PC-9 (cell line): ENCODE measurements at regions of chr16 and their contacts with region 1.

Region 1: DNA sequence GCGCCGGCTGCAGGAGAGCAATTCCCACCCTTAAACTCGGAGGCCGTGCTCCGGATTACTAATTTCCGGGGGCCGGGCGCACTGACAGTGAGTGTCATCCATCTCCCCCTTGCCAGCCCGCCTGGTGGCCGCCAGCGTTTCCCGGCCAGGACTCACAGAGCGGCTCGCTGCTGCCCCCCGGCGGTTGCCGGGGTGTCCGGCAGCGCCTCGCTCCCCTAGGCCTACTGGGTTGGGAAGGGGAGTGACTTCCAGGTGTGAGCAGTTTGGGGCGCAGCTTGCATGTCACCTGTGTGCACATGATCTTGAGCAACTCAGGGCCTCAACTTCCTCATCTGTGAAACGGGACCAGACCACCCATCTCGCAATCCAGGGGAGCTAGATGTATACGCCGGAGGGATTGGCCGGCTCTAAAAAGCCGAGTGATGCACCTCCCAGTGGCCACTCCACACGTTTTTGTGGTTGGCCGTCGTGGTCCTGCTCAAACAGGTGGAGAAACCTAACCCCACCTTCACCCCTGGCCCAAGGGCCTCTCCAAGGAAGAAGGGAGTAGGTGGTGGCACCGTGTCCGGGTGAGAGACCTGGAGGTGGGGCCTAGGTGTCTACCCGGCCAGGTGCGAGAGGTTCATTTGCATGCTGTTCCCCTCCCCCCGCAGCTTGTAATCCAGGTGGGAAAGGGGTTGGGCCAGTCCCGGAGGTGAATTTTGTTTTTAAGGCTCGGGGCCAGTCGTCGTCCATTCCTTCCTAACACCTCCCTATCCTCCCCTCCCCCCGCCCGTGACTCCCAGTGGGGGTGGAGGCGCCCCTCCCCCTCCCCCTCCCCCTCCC is 2.4 kb upstream of the GSE1 start:
- DNase-seq: peak; percentile 89 to 91
- H3K4me3 ChIP-seq: peak overlapping the region; percentile 78
- H3K27ac ChIP-seq: peak overlapping the region; percentile 78
- H3K4me1 ChIP-seq: peaks cover 25% of the 10 kb centered on the region
- H3K27me3 ChIP-seq: no peaks in the 10 kb centered on the region
- CTCF ChIP-seq: peak; percentile 93

Region 2: GRCh38 chr16:85420501-85421337 is 190.0 kb before region 1 on chr16:
- CTCF ChIA-PET with region 1: interaction called, 7 read pairs
- POLR2A ChIA-PET with region 1: no interaction called
- intact Hi-C with region 1: loop called (anchors 1 kb)
- DNase-seq: peak in 1 of 2 experiments; percentile 75
- H3K4me3 ChIP-seq: no peak overlapping the region
- H3K27ac ChIP-seq: no peak overlapping the region
- H3K4me1 ChIP-seq: peaks cover 20% of the 10 kb centered on the region
- H3K27me3 ChIP-seq: no peaks in the 10 kb centered on the region
- CTCF ChIP-seq: peak; percentile 99

Region 3: GRCh38 chr16:85473909-85474620 is 136.7 kb before region 1 on chr16:
- CTCF ChIA-PET with region 1: no interaction called
- POLR2A ChIA-PET with region 1: no interaction called
- intact Hi-C with region 1: loop called (anchors 2 kb)
- DNase-seq: no peak
- H3K4me3 ChIP-seq: no peak overlapping the region
- H3K27ac ChIP-seq: no peak overlapping the region
- H3K4me1 ChIP-seq: peaks cover 39% of the 10 kb centered on the region
- H3K27me3 ChIP-seq: no peaks in the 10 kb centered on the region
- CTCF ChIP-seq: no peak

Region 4: GRCh38 chr16:85528528-85529387 is 82.0 kb before region 1 on chr16:
- CTCF ChIA-PET with region 1: interaction called, 4 read pairs
- POLR2A ChIA-PET with region 1: no interaction called
- intact Hi-C with region 1: loop called (anchors 1 kb)
- DNase-seq: no peak
- H3K4me3 ChIP-seq: no peak overlapping the region
- H3K27ac ChIP-seq: no peak overlapping the region
- H3K4me1 ChIP-seq: peaks cover 25% of the 10 kb centered on the region
- H3K27me3 ChIP-seq: no peaks in the 10 kb centered on the region
- CTCF ChIP-seq: peak; percentile 60

Region 5: DNA sequence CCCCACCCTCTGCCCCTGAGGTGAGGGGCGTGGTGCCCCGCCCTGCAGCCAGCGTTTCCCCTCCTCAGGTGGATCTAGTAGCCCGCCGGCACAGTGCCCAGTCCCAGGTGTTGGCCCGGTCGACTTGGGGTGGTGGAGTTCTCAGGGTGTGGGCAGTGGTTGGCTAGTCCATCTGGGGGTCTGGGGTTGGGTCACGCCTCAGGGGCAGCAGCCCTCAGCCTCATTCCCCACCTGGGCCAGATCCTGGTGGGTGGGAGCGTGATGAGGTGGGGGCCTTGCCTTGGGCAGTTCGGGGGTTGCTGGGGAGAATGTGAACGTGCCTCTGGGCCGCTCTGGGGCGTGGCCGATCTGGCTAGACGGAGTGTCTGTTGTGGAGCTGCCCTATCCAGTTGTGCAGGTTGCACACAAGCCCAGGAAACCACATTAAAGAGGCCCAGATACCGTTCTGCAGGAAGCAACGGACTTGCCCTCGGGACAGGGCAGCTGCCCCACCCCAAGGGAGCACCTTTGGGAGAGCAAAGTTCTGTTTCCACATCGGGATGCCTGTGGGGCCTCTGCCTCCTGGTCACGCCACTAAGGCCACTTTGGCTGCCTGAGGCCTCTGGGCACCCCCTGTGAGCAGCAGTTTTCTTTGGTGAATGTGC is 34.4 kb after region 1 on chr16:
- CTCF ChIA-PET with region 1: interaction called, 3 read pairs
- POLR2A ChIA-PET with region 1: no interaction called
- intact Hi-C with region 1: loop called (anchors 2 kb)
- DNase-seq: peak; percentile 90 to 93
- H3K4me3 ChIP-seq: peak overlapping the region; percentile 46; the same call in 1 of the 2 replicates
- H3K27ac ChIP-seq: peak overlapping the region; percentile 58
- H3K4me1 ChIP-seq: peaks cover 36% of the 10 kb centered on the region
- H3K27me3 ChIP-seq: no peaks in the 10 kb centered on the region
- CTCF ChIP-seq: no peak

Region 6: GRCh38 chr16:85853547-85854545 is 243.1 kb after region 1 on chr16:
- CTCF ChIA-PET with region 1: no interaction called
- POLR2A ChIA-PET with region 1: no interaction called
- intact Hi-C with region 1: no loop called
- DNase-seq: no peak
- H3K4me3 ChIP-seq: no peak overlapping the region
- H3K27ac ChIP-seq: no peak overlapping the region
- H3K4me1 ChIP-seq: no peaks in the 10 kb centered on the region
- H3K27me3 ChIP-seq: peaks cover 98% of the 10 kb centered on the region
- CTCF ChIP-seq: no peak